Caco-2 (cell line): ENCODE measurements at regions of chr2 and their contacts with region 1.

Region 1: GRCh38 chr2:175690113-175690837 is 311.8 kb downstream of the LNPK start:
- DNase-seq: peak in 1 of 2 experiments; percentile 66
- H3K4me3 ChIP-seq: no peak overlapping the region
- H3K4me3 Mint-ChIP-seq: no peak overlapping the region
- H3K27ac Mint-ChIP-seq: no peak overlapping the region
- H3K4me1 ChIP-seq: no peaks in the 10 kb centered on the region
- H3K4me1 Mint-ChIP-seq: no peaks in the 10 kb centered on the region
- H3K27me3 ChIP-seq: no peaks in the 10 kb centered on the region
- H3K27me3 Mint-ChIP-seq: no peaks in the 10 kb centered on the region
- CTCF ChIP-seq: peak; percentile 74 to 87

Region 2: DNA sequence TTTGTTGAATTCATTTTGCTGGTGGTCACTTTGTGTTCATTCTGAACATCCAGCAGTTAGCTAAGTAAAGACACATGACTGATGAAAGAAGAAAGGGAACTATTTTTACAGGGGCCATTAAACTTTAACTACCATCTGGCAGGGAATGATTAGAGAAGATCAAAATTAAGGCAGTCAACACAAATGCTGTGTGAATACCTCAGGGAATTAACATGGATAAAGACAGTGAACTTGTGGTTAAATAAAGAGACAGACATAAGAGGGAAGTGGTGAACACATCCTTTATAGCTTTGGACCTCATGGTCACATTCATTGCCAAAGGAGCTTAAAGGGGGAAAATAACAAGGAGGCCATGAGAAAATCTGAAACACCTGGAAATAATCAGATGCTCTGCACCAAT is 456.1 kb before region 1 on chr2:
- CTCF ChIA-PET with region 1: no interaction called
- POLR2A ChIA-PET with region 1: no interaction called
- intact Hi-C with region 1: no loop called
- DNase-seq: no peak
- H3K4me3 ChIP-seq: no peak overlapping the region
- H3K4me3 Mint-ChIP-seq: no peak overlapping the region
- H3K27ac Mint-ChIP-seq: no peak overlapping the region
- H3K4me1 ChIP-seq: no peaks in the 10 kb centered on the region
- H3K4me1 Mint-ChIP-seq: no peaks in the 10 kb centered on the region
- H3K27me3 ChIP-seq: no peaks in the 10 kb centered on the region
- H3K27me3 Mint-ChIP-seq: no peaks in the 10 kb centered on the region
- CTCF ChIP-seq: no peak

Region 3: DNA sequence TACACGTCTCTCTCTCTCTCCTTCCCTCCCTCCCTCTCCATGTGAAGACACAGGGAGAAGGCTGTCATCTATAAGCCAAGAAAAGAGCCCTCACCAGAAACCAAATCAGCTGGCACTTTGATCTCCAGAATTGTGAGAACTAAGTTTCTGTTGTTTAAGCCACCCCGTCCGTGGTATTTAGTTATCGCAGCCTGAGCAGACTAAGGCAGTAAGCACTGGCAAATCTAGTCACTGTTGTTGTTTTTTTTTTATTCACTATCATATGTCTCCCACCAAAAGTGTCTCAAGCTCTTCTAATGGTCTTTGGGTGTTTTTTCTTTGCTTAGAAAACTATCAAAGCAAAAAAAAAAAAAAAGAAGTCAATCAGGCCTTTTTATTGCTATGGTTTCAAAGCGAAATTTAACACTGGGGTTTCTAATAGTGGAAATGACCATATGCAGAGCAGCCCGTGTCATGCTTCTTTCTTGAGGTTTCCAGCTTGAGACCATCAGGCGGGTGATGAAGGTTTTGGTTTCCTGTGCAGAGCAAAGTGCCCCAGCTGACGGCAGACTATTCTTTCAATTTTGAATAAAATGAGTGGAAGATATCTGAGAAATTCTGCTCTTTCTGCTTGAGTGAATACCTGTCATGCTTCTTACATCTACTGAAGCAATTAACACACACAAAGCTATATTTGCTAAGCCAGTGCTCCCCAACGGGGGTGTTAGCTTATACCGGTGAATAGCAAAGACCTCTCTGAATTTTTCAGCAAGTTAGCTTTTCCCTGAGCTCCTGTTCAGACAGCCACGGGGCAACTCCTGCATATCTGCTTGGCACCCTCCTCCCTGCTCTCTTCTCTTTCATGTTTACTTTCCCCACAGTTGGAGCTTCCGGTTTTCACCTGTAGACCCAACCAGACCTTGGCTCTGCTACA is 114.7 kb before region 1 on chr2:
- CTCF ChIA-PET with region 1: no interaction called
- POLR2A ChIA-PET with region 1: no interaction called
- intact Hi-C with region 1: no loop called
- DNase-seq: no peak
- H3K4me3 ChIP-seq: no peak overlapping the region
- H3K4me3 Mint-ChIP-seq: no peak overlapping the region
- H3K27ac Mint-ChIP-seq: no peak overlapping the region
- H3K4me1 ChIP-seq: no peaks in the 10 kb centered on the region
- H3K4me1 Mint-ChIP-seq: no peaks in the 10 kb centered on the region
- H3K27me3 ChIP-seq: no peaks in the 10 kb centered on the region
- H3K27me3 Mint-ChIP-seq: no peaks in the 10 kb centered on the region
- CTCF ChIP-seq: no peak

Region 4: DNA sequence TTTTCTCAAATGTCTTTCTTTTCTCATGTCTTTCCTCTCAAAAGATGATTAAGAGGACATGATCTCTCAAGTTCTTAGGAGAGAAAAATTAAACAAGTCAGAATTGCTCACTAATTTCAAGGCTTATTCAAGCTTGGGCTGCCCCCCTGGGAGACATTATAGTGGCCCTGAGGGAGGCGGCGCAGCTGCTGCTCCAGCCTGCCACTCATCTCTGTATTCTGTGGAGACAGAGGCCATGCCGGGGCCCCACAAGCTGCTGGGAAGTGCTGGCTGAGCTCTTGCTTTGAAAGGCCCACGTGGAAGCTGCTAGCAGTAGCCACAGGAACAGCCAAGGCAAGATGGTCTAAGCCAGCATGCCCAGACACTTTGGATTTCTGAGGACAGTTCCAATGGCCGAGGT is 44.4 kb after region 1 on chr2:
- CTCF ChIA-PET with region 1: no interaction called
- POLR2A ChIA-PET with region 1: no interaction called
- intact Hi-C with region 1: loop called (anchors 5 kb)
- DNase-seq: no peak
- H3K4me3 ChIP-seq: no peak overlapping the region
- H3K4me3 Mint-ChIP-seq: no peak overlapping the region
- H3K27ac Mint-ChIP-seq: no peak overlapping the region
- H3K4me1 ChIP-seq: peaks cover 15% of the 10 kb centered on the region
- H3K4me1 Mint-ChIP-seq: peaks cover 3% of the 10 kb centered on the region
- H3K27me3 ChIP-seq: no peaks in the 10 kb centered on the region
- H3K27me3 Mint-ChIP-seq: no peaks in the 10 kb centered on the region
- CTCF ChIP-seq: no peak

Region 5: DNA sequence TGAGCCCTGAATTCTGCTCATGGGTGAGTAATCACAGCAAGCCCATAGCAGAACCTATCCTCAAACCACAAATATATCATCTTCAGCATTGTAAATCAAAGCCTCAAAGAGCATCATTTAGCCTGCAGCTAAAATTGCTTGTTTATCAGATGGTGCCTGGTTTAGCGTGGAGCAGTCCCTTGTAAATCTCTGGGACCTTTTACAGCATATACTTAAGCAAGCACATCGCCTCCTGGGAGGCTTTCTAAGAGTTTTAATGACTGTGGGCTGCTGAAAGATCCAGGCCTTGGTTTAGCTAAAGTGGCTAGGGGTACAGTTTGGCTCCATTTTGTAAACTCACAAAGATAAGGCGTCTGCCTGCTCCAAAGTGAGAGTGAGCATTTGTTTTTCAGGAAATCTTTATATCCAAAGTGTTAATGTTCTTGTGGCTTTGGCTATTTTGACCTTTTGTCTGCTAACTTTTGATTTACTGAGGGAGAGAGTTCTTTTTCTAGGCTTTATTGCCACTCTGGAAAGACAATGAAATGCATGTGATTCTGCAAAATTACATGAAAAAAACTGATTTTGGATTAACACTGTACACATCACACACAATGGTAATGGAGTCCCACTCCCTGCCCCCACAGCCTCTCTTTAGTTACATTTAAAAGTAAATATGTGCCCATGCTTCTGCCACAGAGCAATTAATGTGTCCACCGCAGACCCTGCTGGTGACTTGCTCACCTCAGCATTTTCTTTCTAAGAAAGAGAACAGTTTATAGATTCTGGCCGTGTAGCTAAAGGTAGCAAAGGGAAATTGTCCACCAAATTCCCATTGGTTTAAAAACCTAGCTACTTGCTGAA is 117.0 kb after region 1 on chr2:
- CTCF ChIA-PET with region 1: no interaction called
- POLR2A ChIA-PET with region 1: no interaction called
- intact Hi-C with region 1: loop called (anchors 10 kb)
- DNase-seq: no peak
- H3K4me3 ChIP-seq: no peak overlapping the region
- H3K4me3 Mint-ChIP-seq: no peak overlapping the region
- H3K27ac Mint-ChIP-seq: no peak overlapping the region
- H3K4me1 ChIP-seq: no peaks in the 10 kb centered on the region
- H3K4me1 Mint-ChIP-seq: peaks cover 6% of the 10 kb centered on the region
- H3K27me3 ChIP-seq: no peaks in the 10 kb centered on the region
- H3K27me3 Mint-ChIP-seq: peaks cover 9% of the 10 kb centered on the region
- CTCF ChIP-seq: no peak

Region 6: DNA sequence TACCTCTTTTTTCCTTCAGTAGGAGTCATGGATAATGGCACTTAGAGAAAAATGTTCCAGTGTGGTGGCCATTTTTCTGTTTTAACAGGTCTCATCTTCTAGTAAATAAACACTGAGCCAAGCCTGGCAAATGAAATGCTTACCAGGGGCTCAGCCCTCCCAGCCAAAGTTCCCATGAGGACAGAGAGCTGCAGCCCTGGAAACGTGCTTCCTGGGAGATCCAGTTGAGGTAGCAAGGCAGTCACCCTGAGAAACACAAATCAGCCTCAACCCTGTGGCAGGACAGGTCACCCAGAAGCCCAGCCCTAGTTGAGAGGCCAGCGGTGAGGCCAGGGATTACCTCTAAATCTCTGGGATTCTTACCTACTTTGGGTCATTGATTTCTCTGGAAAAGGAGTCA is 171.7 kb after region 1 on chr2:
- CTCF ChIA-PET with region 1: no interaction called
- POLR2A ChIA-PET with region 1: interaction called, 4 read pairs
- intact Hi-C with region 1: loop called (anchors 2 kb)
- DNase-seq: no peak
- H3K4me3 ChIP-seq: no peak overlapping the region
- H3K4me3 Mint-ChIP-seq: no peak overlapping the region
- H3K27ac Mint-ChIP-seq: no peak overlapping the region
- H3K4me1 ChIP-seq: no peaks in the 10 kb centered on the region
- H3K4me1 Mint-ChIP-seq: no peaks in the 10 kb centered on the region
- H3K27me3 ChIP-seq: no peaks in the 10 kb centered on the region
- H3K27me3 Mint-ChIP-seq: peaks cover 15% of the 10 kb centered on the region
- CTCF ChIP-seq: no peak

Region 7: DNA sequence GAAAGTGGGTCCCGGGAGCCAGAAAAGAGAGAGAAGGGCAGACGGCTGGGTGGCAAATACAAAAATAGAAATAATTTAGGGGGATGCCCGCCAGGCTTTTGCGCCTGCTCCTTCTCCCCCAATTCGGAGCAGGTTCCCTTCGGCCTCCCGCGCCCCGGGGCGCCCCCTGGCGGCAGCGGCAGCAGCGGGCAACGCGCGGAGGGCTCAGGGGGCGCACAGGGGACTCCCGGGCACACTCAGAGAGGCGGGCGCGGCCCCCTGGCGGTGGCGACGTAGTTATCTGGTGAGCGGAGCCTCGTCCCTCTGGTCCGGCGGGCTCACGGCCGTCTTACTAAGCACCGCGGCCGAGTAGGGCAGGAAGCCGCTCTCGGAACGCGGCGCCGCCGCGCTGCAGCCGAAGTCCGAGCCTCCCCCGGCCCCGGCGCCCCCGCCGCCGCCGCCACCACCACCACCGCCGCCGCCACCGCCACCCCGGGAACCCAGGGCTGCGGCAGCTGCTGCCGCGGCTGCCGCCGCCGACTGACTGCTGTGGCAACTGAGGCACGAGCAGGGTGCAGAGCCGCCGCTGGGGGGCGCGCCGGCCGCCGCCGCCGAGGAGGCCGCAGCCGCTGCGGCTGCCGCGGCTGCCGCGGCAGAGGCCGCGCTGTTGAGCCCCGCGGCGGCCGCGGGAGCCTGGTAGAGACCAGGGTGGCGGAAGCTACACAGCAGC is 389.7 kb after region 1 on chr2:
- CTCF ChIA-PET with region 1: interaction called, 6 read pairs
- POLR2A ChIA-PET with region 1: no interaction called
- intact Hi-C with region 1: loop called (anchors 1 kb)
- DNase-seq: peak; percentile 77 to 84
- H3K4me3 ChIP-seq: peak overlapping the region; percentile 33
- H3K4me3 Mint-ChIP-seq: peak overlapping the region; percentile 85
- H3K27ac Mint-ChIP-seq: no peak overlapping the region
- H3K4me1 ChIP-seq: peaks cover 3% of the 10 kb centered on the region; the same call in 1 of the 2 replicates
- H3K4me1 Mint-ChIP-seq: peaks cover 15% of the 10 kb centered on the region
- H3K27me3 ChIP-seq: peaks cover 12% of the 10 kb centered on the region
- H3K27me3 Mint-ChIP-seq: peaks cover 56% of the 10 kb centered on the region
- CTCF ChIP-seq: peak; percentile 78 to 97